ENCODE measurements at regions of chr7 and their contacts with region 1.

Region 1: DNA sequence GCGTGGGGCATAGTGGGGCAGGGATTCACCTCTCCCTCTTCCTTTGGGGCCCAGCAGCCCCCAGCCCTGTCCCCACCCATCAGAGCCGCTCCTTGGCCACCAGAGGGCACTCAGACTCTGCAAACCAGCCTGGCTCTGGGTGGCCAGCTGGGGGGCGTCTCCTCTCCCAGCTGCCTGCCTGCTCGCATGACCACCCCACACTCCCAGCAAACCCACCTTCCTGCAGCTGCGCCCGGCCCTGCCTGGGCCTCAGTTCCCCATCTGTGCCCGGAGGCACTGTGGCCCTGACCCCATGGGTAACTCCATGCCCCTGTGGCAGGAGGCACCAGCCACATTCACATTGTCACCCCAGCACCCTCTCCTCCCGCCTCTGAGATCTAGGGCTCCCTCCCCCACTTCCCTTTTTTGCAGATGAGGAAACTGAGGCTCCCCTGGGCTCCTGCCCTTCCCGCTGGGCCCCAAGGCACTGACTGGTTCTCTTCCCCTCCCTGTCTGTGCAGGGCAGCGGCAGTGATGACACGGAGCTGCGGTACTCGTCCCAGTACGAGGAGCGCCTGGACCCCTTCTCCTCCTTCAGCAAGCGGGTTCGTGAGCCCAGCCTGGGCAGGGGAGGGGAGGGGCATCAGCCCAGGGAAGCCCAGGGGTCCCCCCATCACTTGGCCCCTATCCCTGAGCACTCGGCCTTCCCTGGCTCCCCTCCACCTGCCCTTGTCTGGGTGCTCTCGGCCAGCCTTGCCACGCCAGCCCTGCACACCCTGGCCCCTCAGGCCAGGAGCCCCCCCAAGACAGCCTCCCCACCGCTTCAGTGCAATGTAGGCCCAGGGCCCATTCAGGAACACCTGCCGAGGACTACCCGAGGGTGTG is 6.9 kb upstream of the SH2B2 start:
- DNase-seq: no peak
- H3K4me3 ChIP-seq: no peak overlapping the region
- H3K27ac ChIP-seq: no peak overlapping the region
- H3K4me1 ChIP-seq: no peaks in the 10 kb centered on the region
- H3K27me3 ChIP-seq: no peaks in the 10 kb centered on the region
- CTCF ChIP-seq: peak; percentile 27 to 75 (median 71)
- POLR2A ChIP-seq: no peak

Region 2: DNA sequence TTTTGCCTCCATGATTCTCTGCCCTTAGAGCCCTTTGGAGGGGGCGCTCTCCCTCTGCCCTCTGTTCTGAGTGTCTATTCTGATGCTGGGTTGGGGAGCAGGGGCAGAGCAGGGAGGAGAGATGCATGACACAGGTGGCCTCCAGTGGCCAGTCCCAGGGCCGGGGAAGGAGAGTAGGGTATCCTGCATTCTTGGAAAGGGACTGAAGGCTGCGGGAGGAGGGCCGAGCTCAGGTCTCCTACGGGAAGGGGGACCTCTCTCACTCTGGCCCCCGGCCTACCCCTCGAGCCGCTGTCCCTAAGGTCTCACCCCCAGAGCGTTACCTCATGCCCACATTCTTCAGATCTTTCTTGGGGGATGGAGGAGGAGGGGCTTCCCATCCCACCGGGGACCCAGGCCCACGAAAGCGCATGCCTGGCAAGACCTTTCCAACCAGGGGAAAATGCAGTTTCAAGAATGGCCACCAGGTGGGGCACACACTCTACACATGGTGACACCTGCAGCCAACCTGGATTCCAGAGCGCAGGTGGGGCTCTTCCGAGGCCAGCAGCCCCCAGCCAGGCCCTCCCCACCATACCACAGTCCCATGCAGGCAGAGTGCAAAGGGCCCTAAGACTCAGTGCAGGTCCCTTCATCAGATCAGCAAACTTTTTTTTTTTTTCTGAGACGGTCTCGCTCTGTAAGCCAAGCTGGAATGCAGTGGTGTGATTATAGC is 737.1 kb before region 1 on chr7:
- intact Hi-C with region 1: loop called (anchors 10 kb)
- DNase-seq: peak; percentile 51 to 71
- H3K4me3 ChIP-seq: no peak overlapping the region
- H3K27ac ChIP-seq: no peak overlapping the region
- H3K4me1 ChIP-seq: no peaks in the 10 kb centered on the region
- H3K27me3 ChIP-seq: peaks cover 0 to 8% of the 10 kb centered on the region in 2 donors
- CTCF ChIP-seq: peak; percentile 84 to 89 (median 89)
- POLR2A ChIP-seq: no peak